GM18951 (cell line): ENCODE measurements at regions of chr5 and their contacts with region 1.

Region 1: DNA sequence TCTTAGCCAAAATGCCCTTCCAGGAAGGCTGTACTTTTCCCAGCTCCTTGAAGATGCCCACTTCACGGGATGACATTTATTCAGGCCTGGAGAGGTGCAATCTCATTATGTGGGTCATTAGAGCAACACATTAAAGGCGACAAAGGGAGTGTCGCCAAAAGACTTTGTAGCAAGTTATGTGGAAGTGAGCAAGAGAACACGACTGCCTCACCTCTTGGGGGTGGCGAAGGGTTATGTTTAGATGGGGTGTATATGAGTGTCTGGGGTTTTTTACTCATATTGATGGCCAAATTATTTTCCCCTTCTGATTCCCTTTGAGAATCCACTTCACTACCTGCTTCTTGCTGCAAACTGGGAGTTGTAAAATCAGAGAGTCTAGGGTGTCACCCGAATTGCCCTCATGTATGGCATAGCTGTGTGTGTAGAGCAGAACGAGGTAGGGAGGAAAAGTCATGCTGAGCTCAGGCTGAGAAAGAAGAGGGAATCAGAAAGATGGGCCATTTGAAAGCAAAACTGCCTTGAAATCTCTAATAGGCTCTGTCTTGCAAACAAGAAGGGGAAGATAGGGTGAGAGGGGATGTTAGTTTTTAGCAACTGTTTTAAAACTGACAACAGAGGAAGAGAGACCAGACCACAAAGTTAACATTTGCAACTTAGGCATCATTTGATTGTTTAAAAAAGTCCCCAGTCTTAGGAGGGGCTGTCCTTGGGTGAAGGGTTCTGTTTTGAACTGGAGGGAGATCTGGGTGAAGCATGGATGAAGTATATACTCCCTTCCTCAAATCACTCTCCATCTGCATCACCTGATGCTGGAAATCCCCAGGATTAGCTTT is 97.1 kb upstream of the IL12B start:
- POLR2A ChIP-seq: no peak

Region 2: DNA sequence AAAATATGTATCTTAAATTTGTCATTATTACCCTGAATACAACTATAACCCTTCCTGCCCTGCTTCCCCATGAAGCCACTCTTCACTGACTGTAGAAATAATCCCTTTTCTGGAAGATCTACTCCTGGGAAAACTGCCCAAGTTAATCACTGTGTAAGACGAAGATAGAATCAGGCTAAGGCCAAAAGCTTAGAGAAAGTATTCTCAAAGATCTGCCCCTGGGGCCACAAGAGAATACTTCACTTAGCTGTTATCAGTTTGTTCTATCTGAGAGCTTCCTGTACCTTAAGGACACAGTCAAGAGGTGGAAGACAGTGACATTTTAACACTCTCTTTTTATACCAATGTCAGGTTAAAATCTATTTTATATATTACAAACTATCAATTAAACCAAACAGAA is 251.8 kb before region 1 on chr5:
- in situ Hi-C with region 1: no loop called
- POLR2A ChIP-seq: no peak

Region 3: GRCh38 chr5:159331093-159331973 is 96.1 kb before region 1 on chr5:
- in situ Hi-C with region 1: loop called (anchors 10 kb)
- POLR2A ChIP-seq: no peak

Region 4: GRCh38 chr5:159362220-159362619 is 65.2 kb before region 1 on chr5:
- in situ Hi-C with region 1: no loop called
- POLR2A ChIP-seq: no peak

Region 5: GRCh38 chr5:159759791-159760290 is 332.4 kb after region 1 on chr5:
- in situ Hi-C with region 1: no loop called
- POLR2A ChIP-seq: no peak